Natural killer cell (primary cell): ENCODE measurements at regions of chr3 and their contacts with region 1.

Region 1: DNA sequence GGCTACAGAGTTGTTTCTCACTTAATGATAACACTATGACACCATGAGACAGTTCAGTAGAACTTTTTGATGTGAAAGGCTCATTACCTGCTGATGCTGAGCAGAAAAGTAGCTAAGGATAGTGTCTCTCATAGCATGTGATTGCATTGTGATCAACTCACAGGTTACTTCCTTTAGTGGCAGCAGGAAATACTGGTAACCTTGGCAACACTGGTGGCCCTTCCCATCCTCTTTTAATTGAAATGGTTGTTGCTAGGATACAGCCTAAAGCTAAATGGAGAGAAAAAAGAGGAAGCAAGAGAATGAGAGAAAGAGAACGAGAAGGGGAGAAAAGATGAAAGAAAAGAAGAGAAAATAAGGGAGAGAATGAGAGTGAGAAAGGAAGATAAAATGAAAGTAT is 204.7 kb upstream of the GAP43 start:
- DNase-seq: peak in 1 of 2 donors; percentile 13
- ATAC-seq: no peak
- H3K4me3 ChIP-seq: no peak overlapping the region
- H3K4me3 Mint-ChIP-seq: no peak overlapping the region
- H3K27ac ChIP-seq: no peak overlapping the region
- H3K27ac Mint-ChIP-seq: no peak overlapping the region
- H3K4me1 ChIP-seq: no peaks in the 10 kb centered on the region
- H3K4me1 Mint-ChIP-seq: no peaks in the 10 kb centered on the region
- H3K27me3 ChIP-seq: no peaks in the 10 kb centered on the region
- H3K27me3 Mint-ChIP-seq: peaks cover 0 to 6% of the 10 kb centered on the region in 2 donors
- CTCF ChIP-seq: no peak

Region 2: GRCh38 chr3:114789803-114790202 is 628.8 kb before region 1 on chr3:
- intact Hi-C with region 1: no loop called
- DNase-seq: no peak
- ATAC-seq: no peak
- H3K4me3 ChIP-seq: no peak overlapping the region
- H3K4me3 Mint-ChIP-seq: no peak overlapping the region
- H3K27ac ChIP-seq: no peak overlapping the region
- H3K27ac Mint-ChIP-seq: peak overlapping the region in 1 of 2 donors; percentile 35
- H3K4me1 ChIP-seq: no peaks in the 10 kb centered on the region
- H3K4me1 Mint-ChIP-seq: peaks cover 5 to 13% of the 10 kb centered on the region in 2 donors
- H3K27me3 ChIP-seq: no peaks in the 10 kb centered on the region
- H3K27me3 Mint-ChIP-seq: no peaks in the 10 kb centered on the region
- CTCF ChIP-seq: no peak

Region 3: DNA sequence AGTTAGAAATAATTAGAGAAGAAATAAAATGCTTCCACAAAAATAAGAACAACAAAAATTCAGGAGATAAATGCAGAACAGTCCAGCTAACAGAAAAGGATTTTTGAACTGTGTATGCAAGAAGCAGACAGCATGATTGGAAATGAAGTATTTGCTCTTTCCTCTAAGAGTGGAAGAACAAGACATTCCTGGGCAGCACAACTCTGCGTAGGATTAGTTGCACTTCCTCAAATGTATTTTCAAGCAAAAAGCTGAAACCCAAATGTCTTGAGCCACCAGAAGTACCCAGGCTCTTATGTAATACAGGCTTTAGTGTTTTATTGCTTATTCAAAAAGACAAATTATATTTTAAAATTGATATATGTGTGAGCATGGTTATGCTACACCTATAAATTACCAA is 398.7 kb before region 1 on chr3:
- intact Hi-C with region 1: loop called (anchors 5 kb)
- DNase-seq: no peak
- ATAC-seq: no peak
- H3K4me3 ChIP-seq: no peak overlapping the region
- H3K4me3 Mint-ChIP-seq: no peak overlapping the region
- H3K27ac ChIP-seq: no peak overlapping the region
- H3K27ac Mint-ChIP-seq: no peak overlapping the region
- H3K4me1 ChIP-seq: no peaks in the 10 kb centered on the region
- H3K4me1 Mint-ChIP-seq: no peaks in the 10 kb centered on the region
- H3K27me3 ChIP-seq: no peaks in the 10 kb centered on the region
- H3K27me3 Mint-ChIP-seq: no peaks in the 10 kb centered on the region
- CTCF ChIP-seq: no peak